ENCODE measurements at regions of chr1 and their contacts with region 1.

Region 1: DNA sequence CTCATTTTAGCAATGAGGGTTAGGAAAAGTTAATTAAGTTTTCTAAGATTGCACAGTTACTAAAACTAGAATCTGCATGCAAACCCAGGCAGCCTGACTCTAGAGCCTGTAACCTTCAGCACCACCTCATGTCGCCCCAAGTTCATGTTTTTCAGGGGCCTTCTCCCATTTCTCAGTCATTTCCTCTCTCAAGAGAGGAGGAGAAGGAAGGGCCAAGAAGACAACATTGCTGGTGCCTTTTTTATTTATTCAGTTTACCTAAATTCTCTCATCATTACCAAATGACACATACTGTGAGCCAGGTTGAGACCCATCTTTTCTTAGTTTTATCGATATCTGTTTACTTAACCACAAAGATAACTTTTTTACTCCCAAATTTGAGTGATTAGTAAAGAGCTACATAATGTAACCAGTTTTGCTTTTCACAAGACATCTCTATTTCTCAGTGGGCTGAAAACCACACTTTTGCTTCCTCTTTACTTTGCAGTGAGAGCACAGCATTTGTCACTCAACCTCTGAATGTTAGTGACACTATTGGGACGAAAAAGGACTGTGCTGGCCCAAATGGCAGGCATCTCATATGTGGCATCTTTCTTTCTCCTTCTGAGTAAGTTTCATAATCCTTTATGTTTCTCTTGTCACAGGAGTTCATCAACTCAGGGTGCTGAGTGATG is at the start of gene CD101:
- DNase-seq: peak in 4 of 9 donors; percentile 18 to 39 (median 32)
- ATAC-seq: peak; percentile 72
- H3K4me3 ChIP-seq: peak within 1 kb of the TSS; percentile 17
- H3K4me3 Mint-ChIP-seq: peak within 1 kb of the TSS; percentile 30 to 72 (median 60)
- H3K27ac ChIP-seq: peak within 1 kb of the TSS; percentile 60
- H3K27ac Mint-ChIP-seq: peak within 1 kb of the TSS; percentile 84 to 95 (median 87)
- H3K4me1 ChIP-seq: peaks cover 0 to 48% of the 10 kb centered on the region in 2 donors
- H3K4me1 Mint-ChIP-seq: peaks cover 36 to 72% (median 59%) of the 10 kb centered on the region in 7 donors
- H3K27me3 ChIP-seq: no peaks in the 10 kb centered on the region
- H3K27me3 Mint-ChIP-seq: no peaks in the 10 kb centered on the region
- total RNA-seq, gene CD101: 3.9 to 15.4 (median 10.3) TPM

Region 2: GRCh38 chr1:116168277-116169097 is 832.9 kb before region 1 on chr1:
- CTCF ChIA-PET with region 1: no interaction called
- POLR2A ChIA-PET with region 1: no interaction called
- intact Hi-C with region 1: loop called in 1 of 2 experiments (anchors 10 kb)
- DNase-seq: peak; percentile 74 to 88 (median 83)
- ATAC-seq: peak; percentile 97
- H3K4me3 ChIP-seq: peak overlapping the region; percentile 75
- H3K4me3 Mint-ChIP-seq: peak overlapping the region; percentile 70 to 90 (median 88)
- H3K27ac ChIP-seq: peak overlapping the region; percentile 60
- H3K27ac Mint-ChIP-seq: peak overlapping the region; percentile 81 to 96 (median 92)
- H3K4me1 ChIP-seq: peaks cover 9% of the 10 kb centered on the region in 2 donors
- H3K4me1 Mint-ChIP-seq: peaks cover 14 to 23% (median 19%) of the 10 kb centered on the region in 7 donors
- H3K27me3 ChIP-seq: no peaks in the 10 kb centered on the region
- H3K27me3 Mint-ChIP-seq: peaks cover 0 to 14% (median 0%) of the 10 kb centered on the region in 5 donors

Region 3: DNA sequence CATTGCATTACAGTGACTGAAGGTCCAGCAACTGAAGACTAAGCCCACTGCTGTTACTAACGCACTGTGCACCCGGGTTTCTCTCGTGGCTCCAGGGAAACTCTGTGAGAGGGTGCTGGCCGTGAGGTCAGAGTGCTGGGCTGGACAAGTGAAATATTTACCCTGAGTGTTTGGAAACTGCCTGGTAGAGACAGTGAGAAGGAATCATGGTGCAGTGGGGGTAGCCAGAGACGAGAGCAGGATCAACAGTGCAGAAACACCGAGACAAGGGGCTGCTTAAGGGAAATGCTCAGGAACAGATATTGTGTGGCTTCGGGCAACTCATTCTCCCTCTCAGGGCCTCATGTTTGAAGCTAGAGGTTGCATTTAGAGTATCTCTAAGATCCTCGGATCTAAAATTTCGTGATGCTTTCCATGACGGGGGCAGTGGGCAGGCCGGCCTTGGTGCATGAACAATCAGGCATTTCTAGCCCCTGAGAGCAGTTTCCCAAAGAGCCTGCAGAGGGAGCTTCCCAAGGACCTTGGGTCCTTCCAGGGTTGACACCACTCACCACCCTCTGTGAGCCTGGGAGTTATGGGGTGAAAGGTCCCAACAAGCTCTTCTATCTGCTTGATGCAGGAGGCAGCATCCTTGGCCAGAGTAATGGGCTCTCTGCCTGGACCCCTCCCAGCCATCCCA is 237.5 kb before region 1 on chr1:
- CTCF ChIA-PET with region 1: interaction called, 4 read pairs
- POLR2A ChIA-PET with region 1: interaction called, 4 read pairs
- intact Hi-C with region 1: loop called in 1 of 2 experiments (anchors 2 kb)
- DNase-seq: peak in 2 of 9 donors; percentile 64 to 66
- ATAC-seq: peak; percentile 10
- H3K4me3 ChIP-seq: peak overlapping the region; percentile 17
- H3K4me3 Mint-ChIP-seq: peak overlapping the region; percentile 79 to 99 (median 85)
- H3K27ac ChIP-seq: peak overlapping the region; percentile 89
- H3K27ac Mint-ChIP-seq: peak overlapping the region; percentile 93 to 100 (median 97)
- H3K4me1 ChIP-seq: peaks cover 94 to 100% of the 10 kb centered on the region in 2 donors
- H3K4me1 Mint-ChIP-seq: peaks cover 74 to 100% (median 94%) of the 10 kb centered on the region in 7 donors
- H3K27me3 ChIP-seq: no peaks in the 10 kb centered on the region
- H3K27me3 Mint-ChIP-seq: no peaks in the 10 kb centered on the region

Region 4: GRCh38 chr1:117017648-117018047 is 16.3 kb after region 1 on chr1:
- CTCF ChIA-PET with region 1: no interaction called
- POLR2A ChIA-PET with region 1: interaction called, 8 read pairs
- intact Hi-C with region 1: loop called in 1 of 2 experiments (anchors 2 kb)
- DNase-seq: no peak
- ATAC-seq: no peak
- H3K4me3 ChIP-seq: no peak overlapping the region
- H3K4me3 Mint-ChIP-seq: no peak overlapping the region
- H3K27ac ChIP-seq: no peak overlapping the region
- H3K27ac Mint-ChIP-seq: peak overlapping the region in 5 of 9 donors; percentile 12 to 70 (median 54)
- H3K4me1 ChIP-seq: no peaks in the 10 kb centered on the region
- H3K4me1 Mint-ChIP-seq: peaks cover 0 to 58% (median 24%) of the 10 kb centered on the region in 7 donors
- H3K27me3 ChIP-seq: no peaks in the 10 kb centered on the region
- H3K27me3 Mint-ChIP-seq: no peaks in the 10 kb centered on the region

Region 5: DNA sequence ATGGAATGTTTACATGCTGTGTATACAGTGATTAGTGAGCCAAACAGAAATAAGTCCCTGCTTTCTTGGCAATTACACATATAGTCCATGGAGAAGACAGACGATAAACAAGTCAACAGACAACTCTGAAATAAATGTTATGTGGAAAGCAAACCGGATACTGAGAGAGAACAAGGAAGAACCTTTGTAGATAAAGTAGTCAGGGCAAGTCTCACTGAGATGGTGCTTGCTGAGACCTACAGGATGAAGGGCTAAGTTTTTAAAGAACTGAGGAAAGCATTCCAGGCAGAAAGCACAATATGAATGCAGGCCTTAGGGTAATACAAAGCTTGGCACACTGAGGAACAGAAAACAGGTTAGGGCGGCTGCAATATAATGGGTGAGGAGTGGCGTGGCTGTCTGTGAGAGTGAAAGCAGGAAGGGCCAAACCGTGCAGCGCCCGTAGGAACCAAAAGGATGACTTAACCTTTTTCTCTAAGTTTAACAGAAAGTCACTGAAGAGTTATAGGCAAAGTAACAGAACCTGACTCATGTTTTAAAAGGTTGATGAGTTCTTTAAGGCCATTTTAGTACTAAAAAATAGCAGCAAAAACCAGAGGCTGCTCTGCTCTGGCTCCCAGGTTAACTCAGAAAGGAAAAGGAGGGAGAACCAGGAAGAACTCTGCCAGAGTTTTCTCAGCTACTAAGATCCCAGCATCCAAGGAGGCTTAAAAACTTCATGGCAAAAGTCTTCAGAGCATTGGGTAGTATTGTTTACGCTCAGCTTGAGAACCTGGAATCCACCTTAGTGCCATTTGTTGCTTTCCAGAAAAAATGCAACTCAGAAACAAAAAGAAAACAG is 50.1 kb after region 1 on chr1:
- CTCF ChIA-PET with region 1: interaction called, 6 read pairs
- POLR2A ChIA-PET with region 1: interaction called, 4 read pairs
- intact Hi-C with region 1: loop called (anchors 1 to 5 kb)
- DNase-seq: peak in 6 of 9 donors; percentile 13 to 34 (median 28)
- ATAC-seq: peak; percentile 34
- H3K4me3 ChIP-seq: peak overlapping the region; percentile 26
- H3K4me3 Mint-ChIP-seq: peak overlapping the region; percentile 49 to 94 (median 84)
- H3K27ac ChIP-seq: peak overlapping the region; percentile 54
- H3K27ac Mint-ChIP-seq: peak overlapping the region; percentile 87 to 99 (median 95)
- H3K4me1 ChIP-seq: peaks cover 6 to 45% of the 10 kb centered on the region in 2 donors
- H3K4me1 Mint-ChIP-seq: peaks cover 30 to 66% (median 58%) of the 10 kb centered on the region in 7 donors
- H3K27me3 ChIP-seq: no peaks in the 10 kb centered on the region
- H3K27me3 Mint-ChIP-seq: no peaks in the 10 kb centered on the region

Region 6: GRCh38 chr1:117171900-117172511 is 170.6 kb after region 1 on chr1:
- CTCF ChIA-PET with region 1: no interaction called
- POLR2A ChIA-PET with region 1: no interaction called
- intact Hi-C with region 1: no loop called
- DNase-seq: no peak
- ATAC-seq: no peak
- H3K4me3 ChIP-seq: no peak overlapping the region
- H3K4me3 Mint-ChIP-seq: no peak overlapping the region
- H3K27ac ChIP-seq: no peak overlapping the region
- H3K27ac Mint-ChIP-seq: no peak overlapping the region
- H3K4me1 ChIP-seq: no peaks in the 10 kb centered on the region
- H3K4me1 Mint-ChIP-seq: peaks cover 0 to 1% (median 0%) of the 10 kb centered on the region in 7 donors
- H3K27me3 ChIP-seq: no peaks in the 10 kb centered on the region
- H3K27me3 Mint-ChIP-seq: peaks cover 0 to 6% (median 4%) of the 10 kb centered on the region in 5 donors